Prostate gland (tissue), 2 donors: ENCODE measurements at regions of chr7 and their contacts with region 1.

Region 1: GRCh38 chr7:55641273-55641691 is 69.0 kb upstream of the VOPP1 start:
- DNase-seq: peak; percentile 66
- H3K4me3 ChIP-seq: no peak overlapping the region
- H3K27ac ChIP-seq: no peak overlapping the region
- H3K4me1 ChIP-seq: no peaks in the 10 kb centered on the region
- H3K27me3 ChIP-seq: no peaks in the 10 kb centered on the region
- CTCF ChIP-seq: peak; percentile 47 to 88 (median 68)
- POLR2A ChIP-seq: no peak

Region 2: DNA sequence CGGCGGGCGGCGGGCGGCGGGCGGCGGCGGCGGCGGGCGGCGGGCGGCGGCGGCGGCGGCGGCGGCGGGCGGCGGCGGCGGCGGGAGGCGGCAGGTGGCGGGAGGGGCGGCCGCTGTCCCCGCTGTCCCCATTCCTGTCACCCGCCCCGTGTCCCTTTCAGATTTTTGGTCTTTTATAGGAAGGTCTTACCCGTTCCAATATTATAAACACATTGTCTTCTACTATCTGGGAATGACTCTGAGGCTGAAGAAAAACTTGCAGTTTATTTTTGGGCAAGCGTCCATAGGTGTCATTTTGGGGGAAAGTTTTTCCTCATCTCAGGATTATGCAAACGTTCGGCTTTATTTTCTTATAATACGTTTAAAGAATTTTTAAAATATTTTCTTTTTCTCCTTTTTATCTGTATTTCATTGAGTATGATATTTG is 246.6 kb after region 1 on chr7:
- intact Hi-C with region 1: loop called (anchors 10 kb)
- DNase-seq: no peak
- H3K4me3 ChIP-seq: peak overlapping the region; percentile 33 to 36
- H3K27ac ChIP-seq: peak overlapping the region in 1 of 2 donors; percentile 32
- H3K4me1 ChIP-seq: no peaks in the 10 kb centered on the region
- H3K27me3 ChIP-seq: no peaks in the 10 kb centered on the region
- CTCF ChIP-seq: no peak
- POLR2A ChIP-seq: no peak

Region 3: DNA sequence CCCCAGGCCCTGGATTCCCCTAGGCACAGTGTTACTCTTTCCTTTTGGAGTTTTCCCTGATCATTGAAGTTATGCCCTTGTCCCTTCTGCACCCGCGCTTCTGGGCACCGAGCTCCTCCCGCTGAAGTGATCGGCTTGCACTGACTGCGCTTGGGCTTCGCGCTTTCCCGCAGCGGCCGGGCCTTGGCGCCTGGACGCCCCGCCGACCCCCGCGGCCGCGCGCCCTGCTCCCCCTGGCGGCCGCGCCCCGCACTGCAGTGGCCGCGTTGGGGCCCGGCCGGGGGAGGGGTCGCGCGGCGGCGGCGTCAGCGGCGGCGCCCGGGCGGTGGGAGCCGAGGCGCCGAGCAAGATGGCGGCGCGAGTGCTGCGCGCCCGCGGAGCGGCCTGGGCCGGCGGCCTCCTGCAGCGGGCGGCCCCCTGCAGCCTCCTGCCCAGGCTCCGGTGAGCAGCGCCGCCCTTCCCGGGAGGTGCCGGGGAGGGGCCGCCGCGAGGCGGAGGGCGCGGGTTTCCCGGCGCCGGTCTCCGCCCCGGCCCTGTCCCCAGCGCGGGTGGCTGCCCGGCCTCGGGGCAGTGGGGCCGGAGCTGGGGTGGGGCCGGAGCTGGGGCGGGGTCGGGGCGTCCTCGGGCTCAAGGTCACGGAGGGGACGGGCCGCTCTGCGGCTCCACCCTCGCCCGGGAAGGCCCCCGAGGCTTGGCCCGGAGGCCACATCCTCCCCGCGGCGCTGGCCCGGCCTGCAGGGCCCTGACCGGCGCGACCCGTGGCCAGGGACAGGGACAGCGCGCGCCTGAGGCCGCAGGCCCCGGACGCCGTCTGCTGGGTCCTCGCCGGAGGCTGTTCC is 323.2 kb after region 1 on chr7 and contains the start of gene NIPSNAP2:
- intact Hi-C with region 1: loop called (anchors 10 kb)
- DNase-seq: peak; percentile 39
- H3K4me3 ChIP-seq: peak within 1 kb of the TSS; percentile 64 to 78
- H3K27ac ChIP-seq: peak within 1 kb of the TSS; percentile 85 to 96
- H3K4me1 ChIP-seq: peaks cover 6% of the 10 kb centered on the region
- H3K27me3 ChIP-seq: no peaks in the 10 kb centered on the region
- CTCF ChIP-seq: peak; percentile 30 to 77 (median 64)
- POLR2A ChIP-seq: no peak
- total RNA-seq, gene NIPSNAP2: 83.3 to 84.0 TPM

Region 4: DNA sequence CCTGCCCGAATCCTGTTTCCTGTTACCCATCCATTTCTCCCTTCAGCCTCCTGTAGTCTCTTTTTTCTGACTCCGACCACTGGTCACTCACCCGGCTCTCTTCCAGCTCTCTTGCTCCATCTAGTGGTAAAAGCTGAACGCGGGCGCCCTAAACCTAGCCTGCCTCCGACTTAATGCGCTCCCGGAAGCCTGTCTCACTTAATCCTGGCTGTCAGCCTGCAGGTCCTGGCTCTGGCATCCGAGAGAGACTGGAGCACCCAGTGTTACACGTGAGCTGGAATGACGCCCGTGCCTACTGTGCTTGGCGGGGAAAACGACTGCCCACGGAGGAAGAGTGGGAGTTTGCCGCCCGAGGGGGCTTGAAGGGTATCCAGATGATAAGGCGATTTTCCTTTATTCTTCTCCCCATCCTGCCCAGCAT is 433.1 kb after region 1 on chr7:
- intact Hi-C with region 1: loop called (anchors 10 kb)
- DNase-seq: peak; percentile 94
- H3K4me3 ChIP-seq: no peak overlapping the region
- H3K27ac ChIP-seq: no peak overlapping the region
- H3K4me1 ChIP-seq: peaks cover 9% of the 10 kb centered on the region
- H3K27me3 ChIP-seq: no peaks in the 10 kb centered on the region
- CTCF ChIP-seq: peak; percentile 77 to 97 (median 92)
- POLR2A ChIP-seq: no peak